Endothelial cell of umbilical vein (primary cell): ENCODE measurements at regions of chr6 and their contacts with region 1.

Region 1: DNA sequence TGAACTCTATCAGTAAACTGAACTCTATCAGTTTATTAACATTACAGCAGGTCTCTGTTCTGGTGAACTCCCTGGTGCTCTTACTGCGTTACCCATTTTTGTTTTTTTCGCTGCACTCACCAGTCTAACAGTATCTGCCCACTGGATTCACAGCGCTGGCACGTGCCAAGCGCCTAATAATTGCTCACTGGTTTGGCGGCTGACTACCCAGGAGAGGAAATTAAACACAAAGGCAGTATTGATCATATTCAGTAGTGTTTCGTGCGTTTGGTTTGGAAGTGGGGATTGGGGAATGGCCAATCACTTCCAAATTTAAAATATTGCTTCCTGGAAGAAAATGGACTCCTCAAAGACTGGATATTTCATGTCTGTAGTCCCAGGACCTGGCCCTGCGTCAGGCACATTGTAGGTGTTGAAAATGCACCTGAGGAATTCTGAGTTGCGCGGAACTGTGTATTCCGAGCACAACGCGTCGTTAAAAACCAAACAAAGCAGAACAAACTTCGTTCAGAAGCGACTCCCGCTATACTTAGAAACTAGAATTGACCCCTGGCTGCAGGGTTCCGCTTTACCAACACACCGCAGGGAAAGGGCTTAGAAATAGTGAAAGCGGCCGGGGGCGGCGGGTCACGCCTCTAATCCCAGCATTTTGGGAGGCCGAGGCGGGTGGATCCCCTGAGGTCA is 1.1 kb upstream of the RPS12 start:
- DNase-seq: peak; percentile 75
- H3K4me3 ChIP-seq: peak overlapping the region; percentile 47 to 80 (median 55)
- H3K27ac ChIP-seq: peak overlapping the region; percentile 63
- H3K4me1 ChIP-seq: peaks cover 24% of the 10 kb centered on the region
- H3K27me3 ChIP-seq: peaks cover 4 to 5% of the 10 kb centered on the region in 2 experiments
- CTCF ChIP-seq: no peak
- POLR2A ChIP-seq: peak; percentile 38

Region 2: GRCh38 chr6:132512638-132513632 is 300.4 kb before region 1 on chr6 and contains the start of gene STX7:
- CTCF ChIA-PET with region 1: no interaction called
- POLR2A ChIA-PET with region 1: no interaction called
- dilution Hi-C with region 1: no loop called
- intact Hi-C with region 1: loop called (anchors 5 kb)
- DNase-seq: peak; percentile 92
- H3K4me3 ChIP-seq: peak within 1 kb of the TSS; percentile 73 to 99 (median 98)
- H3K27ac ChIP-seq: peak within 1 kb of the TSS; percentile 63
- H3K4me1 ChIP-seq: peaks cover 26% of the 10 kb centered on the region
- H3K27me3 ChIP-seq: peaks cover 6 to 23% of the 10 kb centered on the region in 2 experiments
- CTCF ChIP-seq: no peak
- POLR2A ChIP-seq: peak; percentile 93
- total RNA-seq, gene STX7: 42.5 and 45.5 TPM in 2 replicates

Region 3: DNA sequence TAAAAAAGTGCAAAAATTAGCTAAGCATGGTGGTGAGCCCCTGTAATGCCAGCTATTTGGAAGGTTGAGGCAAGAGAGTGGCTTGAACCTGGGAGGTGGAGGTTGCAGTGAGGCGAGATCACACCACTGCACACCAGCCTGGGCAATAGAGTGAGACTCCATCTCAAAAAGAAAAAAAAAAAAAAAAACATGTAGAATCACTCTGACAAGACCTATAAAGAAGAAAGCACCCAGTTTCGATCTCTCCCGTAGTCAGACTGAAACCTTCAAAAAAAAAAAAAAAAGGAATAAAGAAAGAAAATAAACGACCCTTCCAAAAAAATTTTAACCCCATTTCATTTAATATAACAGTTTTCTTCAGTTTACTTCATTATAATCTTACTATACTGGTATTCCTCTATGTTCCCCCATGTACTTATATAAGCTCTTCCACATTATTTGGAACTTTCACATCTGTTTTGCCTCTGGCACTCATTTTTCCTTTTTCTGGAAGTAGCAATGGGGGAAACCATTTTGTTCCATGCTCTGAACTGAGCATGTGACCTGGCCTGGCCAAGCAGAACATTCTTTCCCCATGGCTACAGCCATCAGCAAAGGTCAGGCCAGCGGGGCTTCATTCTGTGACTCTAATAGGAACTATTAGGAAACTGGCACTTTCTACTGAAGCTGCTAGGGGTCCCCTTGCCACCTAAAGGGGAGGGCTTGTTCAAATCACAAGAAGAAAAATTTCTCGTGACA is 24.5 kb before region 1 on chr6:
- CTCF ChIA-PET with region 1: interaction called, 6 read pairs
- POLR2A ChIA-PET with region 1: no interaction called
- dilution Hi-C with region 1: no loop called
- intact Hi-C with region 1: loop called (anchors 1 kb)
- DNase-seq: no peak
- H3K4me3 ChIP-seq: no peak overlapping the region
- H3K27ac ChIP-seq: no peak overlapping the region
- H3K4me1 ChIP-seq: peaks cover 20% of the 10 kb centered on the region
- H3K27me3 ChIP-seq: no peaks in the 10 kb centered on the region
- CTCF ChIP-seq: no peak
- POLR2A ChIP-seq: no peak